Esophagus squamous epithelium (tissue), 5 donors: ENCODE measurements at regions of chr21 and their contacts with region 1.

Region 1: DNA sequence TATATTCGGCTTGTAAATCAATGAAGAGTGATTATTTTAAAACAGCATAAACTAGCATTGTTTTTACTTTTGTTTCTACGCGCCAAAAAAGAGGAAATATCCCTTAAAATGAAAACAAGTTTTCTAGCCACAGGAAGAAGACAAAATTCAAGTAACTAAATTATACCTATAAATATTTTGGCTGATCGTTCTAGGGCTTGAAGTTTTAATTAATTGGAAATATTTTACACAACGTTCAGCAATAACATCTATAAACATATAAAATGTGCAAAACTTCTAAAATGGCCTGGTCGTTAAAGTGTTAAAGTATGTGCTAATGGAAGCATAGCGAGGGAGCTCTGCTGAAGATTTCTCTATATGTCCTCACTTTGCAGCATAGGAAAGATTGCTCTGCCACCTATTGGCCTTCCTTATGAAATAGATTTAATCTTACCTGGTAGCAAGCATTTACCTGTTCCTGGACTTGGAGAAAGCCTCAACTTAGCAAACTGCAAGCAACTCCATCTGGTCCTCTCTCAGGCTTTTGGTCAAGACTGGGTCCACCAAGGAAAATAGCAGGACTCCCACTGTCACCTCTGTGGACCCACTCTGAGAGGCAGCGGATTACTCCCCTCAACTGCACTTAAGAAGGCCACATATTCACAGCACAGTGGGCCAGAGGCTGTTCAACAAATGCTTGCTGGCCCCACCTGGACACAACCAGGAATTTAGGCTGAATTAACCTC is 351.3 kb upstream of the RUNX1 start:
- DNase-seq: no peak
- H3K4me3 ChIP-seq: no peak overlapping the region
- H3K27ac ChIP-seq: no peak overlapping the region
- H3K4me1 ChIP-seq: peaks cover 0 to 28% (median 11%) of the 10 kb centered on the region in 3 donors
- H3K27me3 ChIP-seq: no peaks in the 10 kb centered on the region
- CTCF ChIP-seq: peak; percentile 30 to 77 (median 64)
- POLR2A ChIP-seq: no peak

Region 2: DNA sequence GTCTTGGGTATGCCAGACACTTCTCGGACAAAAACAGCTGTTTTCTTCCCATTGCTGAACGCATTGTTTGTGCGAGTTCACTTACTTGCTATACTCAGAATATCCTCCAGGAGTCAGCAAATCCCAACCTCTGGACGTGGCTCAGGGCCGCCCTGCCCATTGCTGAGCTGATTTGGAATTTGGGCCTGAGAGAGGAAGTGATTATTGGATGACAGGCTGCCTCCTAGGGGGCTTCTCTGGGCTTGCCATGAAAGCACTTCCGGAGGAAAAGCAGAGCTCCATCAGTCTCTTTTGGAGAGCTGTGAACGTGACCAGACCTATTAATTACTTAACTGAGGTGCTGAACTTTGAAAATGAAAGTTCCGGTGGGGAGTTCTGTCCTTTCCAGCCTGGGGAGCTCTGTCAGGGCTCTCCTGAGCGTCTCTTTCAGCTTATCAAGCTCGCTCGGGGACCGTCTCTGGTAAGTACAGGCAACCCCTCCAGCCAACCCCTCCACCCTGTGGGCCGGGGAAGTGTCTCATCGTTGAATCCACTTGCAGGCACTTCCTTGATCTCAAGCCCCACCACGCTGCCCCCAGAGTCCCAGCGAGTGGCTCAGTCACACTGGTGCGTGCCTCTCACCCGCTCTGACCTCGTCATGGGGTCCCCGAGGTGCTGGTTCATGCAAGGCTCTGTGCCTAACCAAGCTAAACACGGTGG is 654.7 kb before region 1 on chr21:
- intact Hi-C with region 1: loop called (anchors 10 kb)
- DNase-seq: peak; percentile 2
- H3K4me3 ChIP-seq: peak overlapping the region in 1 of 4 donors; percentile 37
- H3K27ac ChIP-seq: peak overlapping the region in 1 of 4 donors; percentile 5
- H3K4me1 ChIP-seq: peaks cover 3 to 33% (median 15%) of the 10 kb centered on the region in 3 donors
- H3K27me3 ChIP-seq: peaks cover 0 to 26% (median 0%) of the 10 kb centered on the region in 4 donors
- CTCF ChIP-seq: peak; percentile 62 to 95 (median 88)
- POLR2A ChIP-seq: no peak

Region 3: GRCh38 chr21:34888569-34889319 is 511.7 kb before region 1 on chr21:
- intact Hi-C with region 1: loop called (anchors 5 kb)
- DNase-seq: peak; percentile 58
- H3K4me3 ChIP-seq: peak overlapping the region; percentile 67 to 82 (median 73)
- H3K27ac ChIP-seq: peak overlapping the region; percentile 95 to 97 (median 97)
- H3K4me1 ChIP-seq: peaks cover 3 to 70% (median 14%) of the 10 kb centered on the region in 3 donors
- H3K27me3 ChIP-seq: peaks cover 0 to 75% (median 4%) of the 10 kb centered on the region in 4 donors
- CTCF ChIP-seq: peak in 2 of 6 experiments; percentile 8 to 15
- POLR2A ChIP-seq: peak in 3 of 4 donors; percentile 76 to 98 (median 96)

Region 4: GRCh38 chr21:35491920-35492678 is 91.7 kb after region 1 on chr21:
- intact Hi-C with region 1: no loop called
- DNase-seq: no peak
- H3K4me3 ChIP-seq: no peak overlapping the region
- H3K27ac ChIP-seq: no peak overlapping the region
- H3K4me1 ChIP-seq: no peaks in the 10 kb centered on the region
- H3K27me3 ChIP-seq: peaks cover 0 to 9% (median 0%) of the 10 kb centered on the region in 4 donors
- CTCF ChIP-seq: no peak
- POLR2A ChIP-seq: no peak

Region 5: GRCh38 chr21:35616090-35616489 is 215.7 kb after region 1 on chr21:
- intact Hi-C with region 1: no loop called
- DNase-seq: no peak
- H3K4me3 ChIP-seq: no peak overlapping the region
- H3K27ac ChIP-seq: no peak overlapping the region
- H3K4me1 ChIP-seq: peaks cover 0 to 5% (median 0%) of the 10 kb centered on the region in 3 donors
- H3K27me3 ChIP-seq: no peaks in the 10 kb centered on the region
- CTCF ChIP-seq: peak in 4 of 6 experiments; percentile 45 to 64 (median 50)
- POLR2A ChIP-seq: no peak